Head of caudate nucleus (tissue), 42 donors: ENCODE measurements at regions of chr22 and their contacts with region 1.

Region 1: DNA sequence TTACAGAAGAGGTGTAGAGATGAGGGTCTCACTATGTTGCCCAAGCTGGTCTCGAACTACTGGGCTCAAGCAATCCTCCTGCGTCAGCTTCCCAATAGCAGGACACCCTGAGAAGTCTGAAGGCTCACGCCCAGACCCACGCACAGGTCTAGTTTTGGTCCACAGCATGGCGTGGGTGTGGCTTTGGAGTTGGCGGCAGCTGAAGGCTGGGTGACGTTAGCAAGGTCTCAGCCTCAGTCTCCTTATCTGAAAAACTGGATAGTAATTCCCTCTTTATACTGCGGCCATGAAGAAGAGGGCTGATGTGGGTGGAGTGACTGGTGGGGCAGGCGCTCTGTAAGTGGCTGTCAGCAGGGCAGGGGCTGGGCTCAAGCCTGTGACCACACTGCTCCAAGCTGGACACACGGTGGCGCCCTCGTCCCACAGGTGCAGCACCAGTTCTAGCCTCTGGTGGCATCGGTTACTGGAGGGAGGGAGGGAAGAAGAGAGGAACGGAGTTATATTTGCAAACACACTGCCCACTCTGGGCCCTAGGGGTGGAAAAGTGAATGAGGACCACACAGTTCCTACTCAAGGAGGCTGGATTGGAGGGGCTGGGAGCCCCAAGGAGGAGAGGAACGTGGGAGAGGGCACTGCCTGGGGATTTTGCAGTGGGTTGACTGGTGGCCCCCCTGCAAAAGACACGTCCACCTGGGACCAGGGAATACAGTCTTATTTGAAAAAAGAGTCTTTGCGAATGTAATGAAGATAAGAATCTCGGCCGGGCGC is 19.6 kb upstream of the CARD10 start:
- DNase-seq: peak; percentile 82 to 97 (median 94)

Region 2: GRCh38 chr22:37591823-37592404 is 53.1 kb after region 1 on chr22:
- intact Hi-C with region 1: loop called (anchors 2 kb)
- DNase-seq: no peak